CD4-positive, alpha-beta T cell (primary cell): ENCODE measurements at regions of chr5 and their contacts with region 1.

Region 1: GRCh38 chr5:67648201-67648671 is 451.6 kb upstream of the CD180 start:
- DNase-seq: no peak
- ATAC-seq: no peak
- H3K4me3 ChIP-seq: no peak overlapping the region
- H3K4me3 Mint-ChIP-seq: no peak overlapping the region
- H3K27ac ChIP-seq: no peak overlapping the region
- H3K27ac Mint-ChIP-seq: no peak overlapping the region
- H3K4me1 ChIP-seq: no peaks in the 10 kb centered on the region
- H3K4me1 Mint-ChIP-seq: peaks cover 9% of the 10 kb centered on the region
- H3K27me3 ChIP-seq: no peaks in the 10 kb centered on the region
- H3K27me3 Mint-ChIP-seq: no peaks in the 10 kb centered on the region
- CTCF ChIP-seq: no peak

Region 2: GRCh38 chr5:67272453-67273130 is 375.6 kb before region 1 on chr5:
- CTCF ChIA-PET with region 1: no interaction called
- POLR2A ChIA-PET with region 1: no interaction called
- intact Hi-C with region 1: loop called in 1 of 2 experiments (anchors 10 kb)
- DNase-seq: no peak
- ATAC-seq: no peak
- H3K4me3 ChIP-seq: no peak overlapping the region
- H3K4me3 Mint-ChIP-seq: no peak overlapping the region
- H3K27ac ChIP-seq: no peak overlapping the region
- H3K27ac Mint-ChIP-seq: no peak overlapping the region
- H3K4me1 ChIP-seq: no peaks in the 10 kb centered on the region
- H3K4me1 Mint-ChIP-seq: no peaks in the 10 kb centered on the region
- H3K27me3 ChIP-seq: no peaks in the 10 kb centered on the region
- H3K27me3 Mint-ChIP-seq: no peaks in the 10 kb centered on the region
- CTCF ChIP-seq: no peak